ENCODE measurements at regions of chr13 and their contacts with region 1.

Region 1: DNA sequence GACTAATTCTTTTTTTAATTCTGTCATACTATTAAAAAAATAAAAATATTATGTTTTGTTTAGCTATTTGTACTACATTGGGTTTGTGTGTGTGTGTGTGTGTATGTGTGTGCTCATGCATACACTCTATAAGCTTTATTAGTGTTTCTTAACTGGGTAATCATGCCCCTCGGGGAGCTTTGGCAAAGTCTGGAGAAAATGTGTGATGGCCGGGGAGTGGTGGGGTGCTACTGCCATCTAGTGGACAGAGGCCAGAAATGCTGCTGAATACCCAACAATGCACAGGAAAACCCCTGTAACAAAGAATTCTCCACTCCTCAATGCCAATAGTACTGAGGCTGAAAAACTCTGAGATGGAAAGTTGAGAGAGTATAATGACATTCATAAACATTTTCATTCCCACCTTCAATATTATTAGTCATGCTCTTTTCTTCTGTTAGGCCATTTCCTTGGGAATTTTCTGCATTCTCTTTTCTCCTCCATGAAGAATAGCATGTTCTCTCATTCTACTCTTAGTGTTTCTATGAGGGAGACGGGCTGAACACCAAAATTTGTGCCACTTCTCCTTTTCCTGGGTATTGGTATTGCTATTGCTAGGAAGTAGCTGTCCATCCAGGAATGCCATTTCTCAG is 157.3 kb downstream of the DNAJC3 start:
- DNase-seq: peak; percentile 39 to 70
- ATAC-seq: peak; percentile 65 to 86 (median 74)
- H3K4me3 ChIP-seq: no peak overlapping the region
- H3K27ac ChIP-seq: no peak overlapping the region
- H3K4me1 ChIP-seq: no peaks in the 10 kb centered on the region
- H3K27me3 ChIP-seq: no peaks in the 10 kb centered on the region
- CTCF ChIP-seq: peak; percentile 96

Region 2: GRCh38 chr13:95494082-95494681 is 340.1 kb before region 1 on chr13:
- intact Hi-C with region 1: loop called in 1 of 2 experiments (anchors 5 kb)
- DNase-seq: no peak
- ATAC-seq: no peak
- H3K4me3 ChIP-seq: no peak overlapping the region
- H3K27ac ChIP-seq: no peak overlapping the region
- H3K4me1 ChIP-seq: no peaks in the 10 kb centered on the region
- H3K27me3 ChIP-seq: no peaks in the 10 kb centered on the region
- CTCF ChIP-seq: peak; percentile 77

Region 3: DNA sequence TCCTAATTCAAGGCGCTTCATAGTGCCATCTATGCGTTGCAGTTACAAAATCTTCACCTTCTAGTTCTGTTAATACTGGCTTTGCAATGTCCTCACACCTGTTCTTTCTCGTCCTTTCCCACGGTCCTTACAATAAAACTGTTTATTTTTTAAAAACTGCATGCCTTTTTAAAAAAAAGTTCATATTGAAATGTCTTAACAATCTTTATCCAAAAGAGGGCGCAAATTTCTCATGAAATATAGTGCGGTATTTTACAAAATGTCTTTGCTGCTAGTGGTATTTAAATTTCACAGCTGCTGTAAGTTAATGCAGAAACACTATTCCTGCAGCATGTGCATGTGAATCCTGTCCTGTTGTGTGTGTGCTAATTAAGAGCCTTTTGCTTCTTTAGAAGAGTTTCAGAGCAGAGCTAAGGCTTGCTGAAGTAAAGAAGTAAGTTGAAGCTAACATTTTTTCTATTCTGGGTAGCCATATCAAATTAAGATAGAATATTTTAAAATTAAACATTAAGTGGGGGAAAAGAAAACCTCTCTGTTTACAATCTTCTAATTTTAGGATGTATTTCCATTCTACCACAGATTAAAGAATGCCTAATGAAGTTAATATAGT is 297.5 kb before region 1 on chr13:
- intact Hi-C with region 1: loop called in 1 of 2 experiments (anchors 5 kb)
- DNase-seq: no peak
- ATAC-seq: no peak
- H3K4me3 ChIP-seq: no peak overlapping the region
- H3K27ac ChIP-seq: no peak overlapping the region
- H3K4me1 ChIP-seq: peaks cover 35% of the 10 kb centered on the region
- H3K27me3 ChIP-seq: no peaks in the 10 kb centered on the region
- CTCF ChIP-seq: peak; percentile 30

Region 4: DNA sequence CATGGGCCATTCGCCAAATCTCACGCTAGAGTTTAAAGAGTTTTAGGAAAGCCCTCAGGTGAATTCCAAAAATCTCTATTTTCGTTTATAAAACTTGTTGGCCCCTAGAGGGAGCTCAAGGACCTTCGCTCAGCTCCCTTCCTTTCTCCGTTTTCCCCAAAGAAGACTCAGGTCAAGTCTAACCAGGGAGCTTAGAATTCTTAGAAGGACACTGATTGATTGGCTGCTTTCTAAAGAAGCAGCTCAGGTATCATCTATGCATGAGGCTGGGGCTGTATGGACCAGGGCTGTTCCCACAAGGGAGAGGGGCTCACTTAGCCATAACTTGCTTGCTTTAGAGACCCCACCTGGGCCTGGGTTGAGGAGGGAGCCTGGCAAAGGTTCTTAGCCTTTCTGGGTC is 210.2 kb before region 1 on chr13:
- intact Hi-C with region 1: loop called (anchors 1 to 2 kb)
- DNase-seq: no peak
- ATAC-seq: peak; percentile 48 to 77 (median 55)
- H3K4me3 ChIP-seq: no peak overlapping the region
- H3K27ac ChIP-seq: no peak overlapping the region
- H3K4me1 ChIP-seq: no peaks in the 10 kb centered on the region
- H3K27me3 ChIP-seq: no peaks in the 10 kb centered on the region
- CTCF ChIP-seq: peak; percentile 71

Region 5: GRCh38 chr13:95636853-95637252 is 197.4 kb before region 1 on chr13:
- intact Hi-C with region 1: no loop called
- DNase-seq: no peak
- ATAC-seq: no peak
- H3K4me3 ChIP-seq: no peak overlapping the region
- H3K27ac ChIP-seq: no peak overlapping the region
- H3K4me1 ChIP-seq: no peaks in the 10 kb centered on the region
- H3K27me3 ChIP-seq: peaks cover 0 to 23% (median 3%) of the 10 kb centered on the region in 3 donors
- CTCF ChIP-seq: no peak

Region 6: DNA sequence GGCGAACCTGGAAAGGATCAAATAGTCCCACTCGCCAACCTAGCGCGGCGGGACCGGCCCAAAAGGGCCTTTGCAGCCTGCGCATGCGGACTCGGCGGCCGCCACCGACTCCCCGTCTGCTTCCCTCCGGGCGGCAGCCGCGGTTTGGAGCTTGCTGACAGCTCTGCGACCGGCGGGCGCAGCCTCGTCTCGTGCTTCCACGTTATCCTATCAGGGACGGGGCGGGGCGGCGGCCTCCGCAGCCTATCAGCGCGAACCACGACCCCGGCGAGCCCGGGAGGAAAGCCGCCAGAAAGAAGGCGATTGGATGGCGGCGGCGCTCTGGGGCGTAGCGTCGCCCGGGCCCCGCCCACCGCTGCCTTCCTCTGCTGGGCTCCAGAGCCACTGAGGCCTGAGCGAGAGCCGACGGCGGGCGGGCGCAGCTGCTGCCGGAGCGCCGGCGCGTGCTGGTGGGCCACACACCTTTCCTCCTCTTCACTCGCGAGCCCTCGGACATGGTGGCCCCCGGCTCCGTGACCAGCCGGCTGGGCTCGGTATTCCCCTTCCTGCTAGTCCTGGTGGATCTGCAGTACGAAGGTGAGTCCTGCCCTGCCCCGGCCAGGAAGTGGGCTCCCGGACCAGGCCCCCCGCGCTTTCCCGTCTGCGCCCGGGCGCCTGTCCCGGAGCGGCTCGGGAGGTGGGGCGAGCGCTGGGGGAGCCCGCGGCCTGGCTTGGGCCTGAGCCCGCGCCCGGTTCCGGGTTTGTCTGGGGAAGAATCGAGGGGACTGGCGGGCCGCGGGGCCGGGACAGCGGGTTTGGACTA is 157.3 kb before region 1 on chr13 and contains the start of gene DNAJC3:
- intact Hi-C with region 1: loop called in 1 of 2 experiments (anchors 5 kb)
- DNase-seq: peak; percentile 99 to 100
- ATAC-seq: peak; percentile 94 to 95 (median 94)
- H3K4me3 ChIP-seq: peak within 1 kb of the TSS; percentile 91
- H3K27ac ChIP-seq: peak within 1 kb of the TSS; percentile 97
- H3K4me1 ChIP-seq: peaks cover 58% of the 10 kb centered on the region
- H3K27me3 ChIP-seq: no peaks in the 10 kb centered on the region
- CTCF ChIP-seq: no peak
- total RNA-seq, gene DNAJC3: 11.5 to 19.6 (median 17.2) TPM

Region 7: GRCh38 chr13:95714142-95714829 is 120.0 kb before region 1 on chr13:
- intact Hi-C with region 1: no loop called
- DNase-seq: no peak
- ATAC-seq: no peak
- H3K4me3 ChIP-seq: no peak overlapping the region
- H3K27ac ChIP-seq: no peak overlapping the region
- H3K4me1 ChIP-seq: no peaks in the 10 kb centered on the region
- H3K27me3 ChIP-seq: no peaks in the 10 kb centered on the region
- CTCF ChIP-seq: no peak